ENCODE measurements at regions of chr13 and their contacts with region 1.

Region 1: DNA sequence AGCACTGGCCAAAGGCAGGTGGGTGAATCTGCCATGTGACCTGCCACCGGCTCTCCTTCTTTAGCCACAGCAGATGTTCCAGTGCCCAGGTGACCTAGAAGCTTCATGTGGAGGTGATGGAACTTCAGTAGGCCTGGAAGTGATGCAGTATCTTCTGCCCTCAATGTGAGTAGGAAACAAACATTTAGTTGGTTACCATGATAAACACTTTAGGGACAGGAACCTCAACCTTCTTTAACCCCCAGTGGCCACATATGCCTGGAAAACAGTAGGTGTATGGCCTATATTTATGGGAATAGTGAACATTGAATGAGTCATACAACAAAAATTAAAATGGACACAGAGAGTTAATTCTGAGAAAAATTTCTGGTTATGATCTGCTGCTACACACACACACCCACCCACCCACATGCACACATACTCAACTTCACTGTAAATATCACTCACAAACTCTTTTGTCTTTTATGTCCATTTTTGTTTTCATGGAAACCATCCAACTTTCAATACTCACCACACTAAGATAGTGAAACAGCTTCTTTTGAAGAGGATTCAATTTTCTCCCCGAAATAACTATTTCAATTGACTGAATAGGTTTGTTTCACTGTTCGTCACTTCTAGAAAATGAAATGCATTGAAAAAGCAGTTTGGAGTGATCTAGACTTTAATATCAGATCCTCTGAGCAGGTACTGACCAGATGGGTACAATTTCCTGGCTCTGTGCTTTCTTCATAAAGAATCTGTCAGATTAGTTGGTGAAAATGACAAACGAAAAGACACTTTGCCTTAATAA is 97.3 kb downstream of the STARD13 start:
- DNase-seq: peak; percentile 59
- H3K4me3 Mint-ChIP-seq: peak overlapping the region; percentile 13
- H3K27ac Mint-ChIP-seq: peak overlapping the region; percentile 99
- H3K4me1 Mint-ChIP-seq: peaks cover 41% of the 10 kb centered on the region
- H3K27me3 Mint-ChIP-seq: no peaks in the 10 kb centered on the region

Region 2: DNA sequence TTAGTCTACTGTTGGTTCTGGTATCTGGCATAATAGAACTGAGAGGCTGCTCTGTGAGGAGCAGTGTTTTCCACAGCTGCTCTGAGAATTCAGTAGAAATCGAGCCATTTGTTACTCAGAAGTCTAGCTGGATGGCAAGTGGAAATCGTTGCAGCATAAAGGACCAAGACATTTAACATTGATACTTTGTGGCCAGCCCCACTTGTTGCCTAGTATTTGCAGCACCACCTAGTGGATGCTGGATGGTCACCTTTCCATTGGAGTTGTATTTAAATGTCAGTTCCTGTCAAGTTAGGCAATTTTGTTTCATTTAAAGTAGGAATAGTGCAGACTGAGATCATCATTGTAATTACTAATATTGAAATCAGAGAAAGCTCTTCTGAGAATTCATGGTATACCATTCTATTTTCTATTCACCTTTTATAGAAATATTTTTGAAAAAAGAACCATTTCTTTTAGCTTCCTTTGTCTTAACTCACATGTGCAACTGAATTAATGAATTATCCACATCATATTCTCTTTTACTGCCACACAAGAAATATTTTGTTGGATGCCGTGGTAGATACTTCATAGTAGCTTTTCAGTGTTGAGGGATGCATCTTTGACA is 537.5 kb before region 1 on chr13:
- intact Hi-C with region 1: loop called (anchors 2 kb)
- DNase-seq: peak; percentile 87
- H3K4me3 Mint-ChIP-seq: no peak overlapping the region
- H3K27ac Mint-ChIP-seq: no peak overlapping the region
- H3K4me1 Mint-ChIP-seq: peaks cover 29% of the 10 kb centered on the region
- H3K27me3 Mint-ChIP-seq: no peaks in the 10 kb centered on the region

Region 3: DNA sequence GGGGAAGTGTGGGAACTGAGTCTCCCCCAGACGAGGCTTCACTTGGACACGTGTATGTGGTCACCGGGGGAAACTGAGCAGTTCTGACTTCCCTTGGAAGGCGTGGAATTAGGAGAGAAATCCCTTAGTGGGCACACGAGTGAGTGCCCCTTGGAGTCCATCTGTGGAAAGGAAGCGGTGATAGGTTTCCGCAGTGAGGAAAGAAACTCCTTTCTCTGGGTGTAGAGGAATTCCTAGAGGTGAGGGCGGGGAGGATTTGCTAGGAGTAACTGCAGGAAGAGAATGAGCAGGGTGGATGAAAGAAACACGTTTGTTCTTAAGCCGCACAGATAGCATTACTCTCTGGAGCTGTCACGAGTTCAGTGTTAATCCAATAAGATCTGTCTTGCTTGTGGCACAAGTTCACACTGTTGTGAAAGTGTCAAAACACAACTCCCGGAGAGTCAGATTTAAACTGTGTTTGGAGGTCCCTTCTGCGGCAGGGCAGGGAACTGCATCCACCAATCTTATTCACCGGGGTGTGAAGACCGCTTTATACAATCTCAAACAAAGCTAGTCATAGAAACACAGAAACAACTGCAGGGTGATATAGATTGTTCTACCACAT is 170.9 kb before region 1 on chr13:
- intact Hi-C with region 1: loop called (anchors 2 kb)
- DNase-seq: peak; percentile 84
- H3K4me3 Mint-ChIP-seq: peak overlapping the region; percentile 76
- H3K27ac Mint-ChIP-seq: peak overlapping the region; percentile 68
- H3K4me1 Mint-ChIP-seq: peaks cover 11% of the 10 kb centered on the region
- H3K27me3 Mint-ChIP-seq: peaks cover 59% of the 10 kb centered on the region

Region 4: DNA sequence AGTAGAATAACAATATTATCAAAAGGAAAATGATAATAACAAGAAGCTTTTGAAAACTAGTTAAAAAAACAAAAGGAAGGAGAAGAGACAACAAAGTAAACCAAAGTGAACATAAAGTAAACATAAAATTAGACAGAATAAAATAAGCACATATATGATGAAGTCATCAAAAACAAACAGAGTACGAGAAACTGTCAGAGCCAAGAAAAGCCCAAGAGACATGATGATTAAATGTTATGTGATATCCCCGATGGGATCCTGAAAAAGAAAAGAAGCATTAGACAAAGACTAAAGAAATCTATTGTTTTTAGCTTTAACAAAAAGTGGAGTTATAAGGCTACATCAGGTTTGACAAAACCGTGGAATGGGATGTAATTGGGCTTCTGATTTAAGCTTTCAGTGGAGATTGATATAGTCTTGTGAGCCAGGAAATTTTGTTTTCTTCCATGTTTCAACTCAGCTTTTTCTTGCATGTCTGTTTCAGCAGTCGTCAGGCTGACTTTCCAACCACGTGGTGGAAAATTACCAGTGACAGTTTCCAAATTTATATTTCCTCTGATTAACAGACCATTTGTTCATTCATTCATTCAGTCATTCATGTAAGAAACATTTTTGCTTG is 107.2 kb before region 1 on chr13:
- intact Hi-C with region 1: loop called (anchors 1 kb)
- DNase-seq: no peak
- H3K4me3 Mint-ChIP-seq: no peak overlapping the region
- H3K27ac Mint-ChIP-seq: no peak overlapping the region
- H3K4me1 Mint-ChIP-seq: peaks cover 15% of the 10 kb centered on the region
- H3K27me3 Mint-ChIP-seq: peaks cover 2% of the 10 kb centered on the region

Region 5: DNA sequence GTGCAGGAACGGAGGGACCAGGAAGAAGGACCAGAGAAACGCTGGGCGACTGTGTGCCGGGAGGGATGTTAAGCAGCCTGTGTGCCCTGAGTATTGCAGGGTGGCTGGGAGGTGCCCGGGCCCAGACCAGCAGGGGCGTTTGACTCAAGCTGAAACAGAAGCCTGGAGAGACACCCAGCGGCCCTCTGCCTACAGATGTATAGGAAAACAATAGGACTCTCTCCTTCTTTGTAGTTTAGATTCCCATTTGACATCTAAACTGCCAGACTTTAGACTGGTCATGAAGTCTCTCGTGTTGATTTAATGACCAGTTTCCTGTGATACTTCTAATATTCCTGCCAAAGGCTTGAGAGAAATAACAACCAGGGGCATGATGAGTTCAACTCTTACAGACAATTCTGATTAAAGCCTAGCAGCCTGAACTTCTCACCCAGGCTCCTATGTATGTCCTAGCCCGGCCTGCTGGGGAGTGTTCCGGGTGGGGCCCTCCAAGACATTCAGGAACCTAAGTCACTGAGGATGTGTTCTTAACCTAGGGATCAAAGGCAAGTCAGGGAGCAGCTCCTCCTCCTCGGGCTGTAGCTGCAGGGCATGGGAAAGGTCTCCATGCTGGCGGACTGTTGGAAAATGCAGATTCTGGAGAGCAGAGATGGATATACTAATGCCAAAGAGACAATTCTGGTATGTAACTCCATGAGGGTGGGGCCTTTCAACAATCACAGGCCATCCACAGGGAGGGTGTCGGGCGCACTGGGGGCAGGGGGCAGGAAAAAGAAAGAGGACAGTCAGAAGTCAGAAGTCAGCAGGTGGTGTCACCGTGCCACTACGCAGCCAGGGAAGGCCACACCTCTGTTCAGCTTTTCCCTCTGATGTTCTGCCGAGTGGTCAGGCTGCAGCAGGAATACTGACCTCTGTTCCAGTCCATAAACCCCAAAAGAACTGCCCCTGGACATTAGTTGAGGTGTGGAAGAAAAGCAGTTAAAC is 34.6 kb before region 1 on chr13:
- intact Hi-C with region 1: no loop called
- DNase-seq: no peak
- H3K4me3 Mint-ChIP-seq: no peak overlapping the region
- H3K27ac Mint-ChIP-seq: no peak overlapping the region
- H3K4me1 Mint-ChIP-seq: peaks cover 4% of the 10 kb centered on the region
- H3K27me3 Mint-ChIP-seq: no peaks in the 10 kb centered on the region

Region 6: DNA sequence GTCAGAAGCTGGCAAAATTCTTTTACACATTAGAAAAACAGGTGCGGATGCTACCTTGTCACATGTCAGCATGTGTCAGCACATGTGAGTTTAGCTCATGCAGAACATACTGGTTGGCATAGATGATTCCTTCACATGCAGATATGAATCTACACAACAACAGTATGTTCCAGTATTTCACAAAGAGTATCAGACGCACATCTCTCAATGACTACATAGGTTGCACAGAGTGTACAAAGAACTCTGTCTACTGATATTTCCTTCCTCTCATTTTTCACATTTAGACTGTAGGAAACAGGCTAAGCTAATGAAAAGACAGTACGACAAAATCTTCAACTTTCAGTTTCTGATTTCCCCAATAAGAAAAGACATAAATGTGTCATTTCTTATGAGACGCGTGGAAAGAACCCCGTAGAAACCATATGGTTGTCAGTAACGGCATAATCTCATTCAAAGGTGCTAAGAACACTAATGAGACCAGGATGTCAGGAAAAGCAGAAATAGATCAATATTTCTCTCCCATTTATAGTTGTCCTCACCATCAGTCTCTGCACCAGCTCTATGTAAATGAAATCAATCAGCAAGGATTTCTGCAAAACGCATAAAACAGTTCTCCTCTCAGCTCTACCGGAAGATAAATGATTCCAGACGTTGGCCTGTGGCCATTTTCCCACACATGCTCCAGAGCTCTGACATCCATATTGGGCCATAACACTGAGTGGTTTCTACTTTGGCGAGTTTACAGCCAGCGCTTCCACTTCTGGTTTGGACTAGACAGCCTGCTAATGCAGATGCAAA is 16.0 kb after region 1 on chr13:
- intact Hi-C with region 1: loop called (anchors 1 kb)
- DNase-seq: no peak
- H3K4me3 Mint-ChIP-seq: peak overlapping the region; percentile 82
- H3K27ac Mint-ChIP-seq: peak overlapping the region; percentile 87
- H3K4me1 Mint-ChIP-seq: peaks cover 49% of the 10 kb centered on the region
- H3K27me3 Mint-ChIP-seq: no peaks in the 10 kb centered on the region

Region 7: GRCh38 chr13:33367926-33368325 is 179.6 kb after region 1 on chr13:
- intact Hi-C with region 1: no loop called
- DNase-seq: no peak
- H3K4me3 Mint-ChIP-seq: no peak overlapping the region
- H3K27ac Mint-ChIP-seq: peak overlapping the region; percentile 11
- H3K4me1 Mint-ChIP-seq: peaks cover 6% of the 10 kb centered on the region
- H3K27me3 Mint-ChIP-seq: no peaks in the 10 kb centered on the region

Region 8: GRCh38 chr13:34064456-34065205 is 876.3 kb after region 1 on chr13:
- intact Hi-C with region 1: no loop called
- DNase-seq: no peak
- H3K4me3 Mint-ChIP-seq: no peak overlapping the region
- H3K27ac Mint-ChIP-seq: no peak overlapping the region
- H3K4me1 Mint-ChIP-seq: no peaks in the 10 kb centered on the region
- H3K27me3 Mint-ChIP-seq: no peaks in the 10 kb centered on the region

Measured in activated CD4-positive, alpha-beta T cell treated with anti-CD3 and anti-CD28 coated beads, Interleukin-2, amount 10 ng/mL, durations not matched to agents 24 days and 14 days (primary cell).